Activated CD4-positive, alpha-beta T cell treated with anti-CD3 and anti-CD28 coated beads, Interleukin-2, amount 10 ng/mL, durations not matched to agents 24 days and 14 days (primary cell): ENCODE measurements at regions of chr5 and their contacts with region 1.

Region 1: DNA sequence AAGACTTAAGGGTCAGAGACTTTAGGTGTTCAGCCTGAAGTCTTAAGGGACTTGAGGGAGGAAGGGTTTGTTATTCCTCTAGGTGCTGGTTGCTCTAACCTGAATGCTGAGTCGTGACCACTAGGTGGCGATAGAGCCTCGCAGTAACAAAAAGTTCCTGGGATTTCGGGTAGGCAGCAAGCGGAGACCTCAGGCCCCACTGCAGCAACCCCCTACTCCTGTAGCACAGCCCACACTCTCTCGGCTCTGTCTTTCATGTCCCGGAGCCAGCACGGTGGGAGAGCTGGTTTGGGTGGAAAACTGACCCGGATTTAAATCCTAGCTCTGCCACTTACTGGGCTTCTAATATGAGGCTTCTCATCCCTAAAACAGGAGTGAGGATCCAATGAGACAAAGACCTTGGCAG is 100.3 kb upstream of the PANK3 start:
- DNase-seq: peak; percentile 87
- H3K4me3 Mint-ChIP-seq: no peak overlapping the region
- H3K27ac Mint-ChIP-seq: no peak overlapping the region
- H3K4me1 Mint-ChIP-seq: peaks cover 11% of the 10 kb centered on the region
- H3K27me3 Mint-ChIP-seq: no peaks in the 10 kb centered on the region

Region 2: DNA sequence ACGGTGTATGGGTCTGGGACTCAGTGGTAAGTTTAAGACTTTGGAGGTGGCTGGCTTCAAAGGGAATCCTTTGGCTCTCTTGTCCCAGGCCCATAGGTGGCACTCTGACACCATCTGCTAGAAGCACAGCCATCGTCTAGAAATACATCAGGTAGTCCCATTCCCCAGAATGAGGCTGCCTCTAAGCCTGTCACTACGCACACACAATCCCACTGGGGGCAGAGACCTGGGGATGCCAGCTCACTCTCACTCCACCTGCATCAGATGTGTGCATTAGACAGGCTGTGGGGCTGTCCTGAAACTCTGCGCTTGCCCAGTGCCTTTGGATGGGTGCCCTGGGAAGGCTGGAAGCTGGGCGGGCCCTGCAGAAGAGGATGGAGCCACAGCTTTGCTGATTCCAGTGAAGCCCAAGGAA is 27.1 kb after region 1 on chr5:
- intact Hi-C with region 1: no loop called
- DNase-seq: peak; percentile 70
- H3K4me3 Mint-ChIP-seq: no peak overlapping the region
- H3K27ac Mint-ChIP-seq: no peak overlapping the region
- H3K4me1 Mint-ChIP-seq: no peaks in the 10 kb centered on the region
- H3K27me3 Mint-ChIP-seq: no peaks in the 10 kb centered on the region

Region 3: DNA sequence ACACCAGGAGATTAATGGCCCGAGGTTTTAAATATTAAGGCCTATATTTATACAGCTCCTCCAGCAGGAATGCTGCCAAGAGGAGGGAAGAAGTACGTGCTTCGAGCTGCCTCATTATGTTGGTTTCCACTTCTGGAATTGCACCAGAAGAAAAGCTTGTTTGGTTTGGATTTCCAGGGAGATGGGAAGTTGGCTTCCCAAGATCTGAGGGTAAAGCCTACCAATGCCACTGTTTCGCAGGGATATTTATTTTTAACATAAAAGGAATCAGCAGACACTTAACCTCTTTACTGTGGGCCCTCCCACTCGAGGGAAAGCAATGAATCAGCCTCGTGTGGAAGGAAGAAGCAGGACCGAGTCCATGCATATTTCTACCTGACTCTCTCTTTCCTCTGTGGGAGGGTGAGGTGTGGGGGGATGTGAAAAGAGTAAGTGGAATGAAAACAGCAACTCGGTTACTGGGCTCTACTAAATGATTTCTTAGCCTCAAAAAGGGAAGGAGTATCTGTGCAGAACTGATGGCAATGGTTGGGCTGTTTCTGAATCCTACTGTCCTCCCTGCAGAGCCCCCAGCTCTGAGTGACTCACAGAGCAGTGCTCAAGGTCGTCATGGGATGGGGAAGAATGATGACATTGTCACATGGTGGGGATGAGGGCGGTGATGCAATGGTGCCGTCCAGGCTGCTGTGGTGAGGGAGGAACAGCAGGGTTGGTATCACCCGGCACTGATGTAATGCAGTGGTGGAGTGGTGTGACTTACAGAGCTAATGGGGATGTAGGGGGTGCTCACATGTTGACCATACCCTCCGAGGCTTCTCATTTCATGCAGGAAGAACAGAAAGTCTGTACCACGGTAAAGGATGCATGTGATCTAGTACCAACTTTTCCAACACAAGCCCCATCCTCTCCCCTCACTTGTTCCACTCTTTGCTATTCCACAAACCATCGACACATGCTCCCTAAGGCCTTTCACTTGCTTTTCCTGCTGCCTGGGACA is 114.6 kb after region 1 on chr5:
- intact Hi-C with region 1: no loop called
- DNase-seq: no peak
- H3K4me3 Mint-ChIP-seq: no peak overlapping the region
- H3K27ac Mint-ChIP-seq: peak overlapping the region; percentile 82
- H3K4me1 Mint-ChIP-seq: peaks cover 32% of the 10 kb centered on the region
- H3K27me3 Mint-ChIP-seq: no peaks in the 10 kb centered on the region

Region 4: DNA sequence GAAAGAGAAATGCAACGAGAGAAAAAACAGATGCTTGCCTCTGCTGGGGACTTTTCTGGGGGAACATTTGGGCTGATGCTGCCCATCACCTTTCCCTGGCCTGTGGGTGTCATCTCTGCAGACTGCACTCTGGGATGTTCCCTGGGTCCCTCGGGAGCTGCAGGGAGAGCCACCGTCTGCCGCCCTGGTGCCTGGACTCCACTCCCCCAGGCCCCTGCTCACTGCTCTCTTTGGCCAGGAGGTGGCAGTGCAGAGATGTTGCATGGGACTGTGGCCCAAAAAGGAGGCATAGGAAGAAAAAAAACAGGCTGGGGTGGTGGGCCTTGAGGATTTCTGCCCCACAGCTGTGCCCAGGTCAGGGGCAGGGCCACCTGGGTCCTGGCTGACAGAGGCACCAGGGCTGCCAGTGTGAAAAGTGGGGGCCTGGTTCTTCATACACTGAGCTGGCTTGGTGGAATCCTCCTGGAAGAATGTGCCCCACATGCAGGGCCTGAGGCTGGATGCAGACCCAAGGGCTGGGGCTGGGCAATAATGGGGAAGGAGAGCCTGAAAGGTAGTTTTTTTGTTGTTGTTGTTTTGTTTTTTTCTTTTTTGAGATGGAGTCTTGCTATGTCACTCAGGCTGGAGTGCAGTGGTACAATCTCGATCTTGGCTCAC is 267.8 kb after region 1 on chr5:
- intact Hi-C with region 1: loop called (anchors 5 kb)
- DNase-seq: peak; percentile 72
- H3K4me3 Mint-ChIP-seq: no peak overlapping the region
- H3K27ac Mint-ChIP-seq: no peak overlapping the region
- H3K4me1 Mint-ChIP-seq: peaks cover 5% of the 10 kb centered on the region
- H3K27me3 Mint-ChIP-seq: no peaks in the 10 kb centered on the region

Region 5: GRCh38 chr5:168987543-168988300 is 308.2 kb after region 1 on chr5:
- intact Hi-C with region 1: loop called (anchors 5 kb)
- DNase-seq: peak; percentile 85
- H3K4me3 Mint-ChIP-seq: no peak overlapping the region
- H3K27ac Mint-ChIP-seq: no peak overlapping the region
- H3K4me1 Mint-ChIP-seq: peaks cover 2% of the 10 kb centered on the region
- H3K27me3 Mint-ChIP-seq: peaks cover 6% of the 10 kb centered on the region

Region 6: DNA sequence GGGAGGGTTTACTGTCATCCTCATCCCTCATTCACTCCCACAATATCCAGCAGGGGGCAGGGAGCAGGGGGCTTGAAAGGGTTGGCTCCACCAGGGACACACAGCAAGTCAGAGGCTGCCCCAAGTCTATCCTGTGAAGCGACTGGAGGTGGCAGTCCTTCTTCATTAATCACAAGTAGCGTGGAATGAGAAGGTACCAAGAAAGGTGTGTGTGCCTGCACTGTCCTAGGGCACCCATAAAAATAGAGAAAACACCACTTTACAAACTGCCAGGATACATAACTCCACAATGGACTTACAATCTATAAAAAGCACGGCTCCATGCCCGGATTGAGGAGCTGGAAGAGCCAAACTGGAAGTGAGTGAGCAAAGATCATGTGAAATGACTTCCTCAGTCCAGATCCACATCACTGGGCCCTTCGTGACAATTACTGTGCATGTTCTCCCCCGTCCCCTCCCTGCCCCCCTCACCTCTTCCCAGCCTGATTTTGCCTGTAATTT is 437.5 kb after region 1 on chr5:
- intact Hi-C with region 1: no loop called
- DNase-seq: no peak
- H3K4me3 Mint-ChIP-seq: no peak overlapping the region
- H3K27ac Mint-ChIP-seq: no peak overlapping the region
- H3K4me1 Mint-ChIP-seq: no peaks in the 10 kb centered on the region
- H3K27me3 Mint-ChIP-seq: peaks cover 1% of the 10 kb centered on the region

Region 7: DNA sequence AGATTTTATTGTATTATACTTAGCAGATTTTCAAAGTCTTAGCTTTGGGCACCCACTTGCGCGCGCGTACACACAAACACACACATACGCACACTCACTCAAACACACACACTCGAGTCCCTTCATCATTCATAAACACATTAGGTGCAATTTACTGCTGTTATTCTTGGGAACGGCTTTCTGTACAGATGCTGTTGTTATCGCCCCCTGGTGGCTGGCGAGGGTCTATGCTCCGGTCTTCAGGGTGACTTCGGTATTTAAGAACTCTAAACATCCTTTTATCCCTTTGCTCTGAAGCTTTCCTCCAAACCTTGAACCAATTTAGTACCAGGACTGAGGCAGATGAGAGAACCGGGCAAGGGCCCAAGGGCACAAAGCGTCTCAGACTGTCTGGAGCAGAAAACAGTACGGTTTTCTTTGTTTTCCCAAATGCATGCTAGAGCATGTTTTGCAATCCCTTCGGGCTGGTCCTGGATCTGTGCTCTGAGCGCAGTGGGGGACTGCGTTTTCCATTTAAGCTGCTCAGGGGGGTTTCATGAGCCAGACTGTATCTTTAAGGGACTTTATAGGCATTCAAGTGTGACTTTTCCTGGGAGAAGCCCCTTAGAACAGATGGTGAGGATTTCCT is 623.1 kb after region 1 on chr5:
- intact Hi-C with region 1: loop called (anchors 1 kb)
- DNase-seq: peak; percentile 87
- H3K4me3 Mint-ChIP-seq: no peak overlapping the region
- H3K27ac Mint-ChIP-seq: no peak overlapping the region
- H3K4me1 Mint-ChIP-seq: no peaks in the 10 kb centered on the region
- H3K27me3 Mint-ChIP-seq: peaks cover 48% of the 10 kb centered on the region

Region 8: GRCh38 chr5:169670769-169671525 is 991.4 kb after region 1 on chr5:
- intact Hi-C with region 1: loop called (anchors 10 kb)
- DNase-seq: peak; percentile 79
- H3K4me3 Mint-ChIP-seq: peak overlapping the region; percentile 33
- H3K27ac Mint-ChIP-seq: peak overlapping the region; percentile 61
- H3K4me1 Mint-ChIP-seq: peaks cover 27% of the 10 kb centered on the region
- H3K27me3 Mint-ChIP-seq: no peaks in the 10 kb centered on the region